ENCODE measurements at regions of chr5 and their contacts with region 1.

Region 1: DNA sequence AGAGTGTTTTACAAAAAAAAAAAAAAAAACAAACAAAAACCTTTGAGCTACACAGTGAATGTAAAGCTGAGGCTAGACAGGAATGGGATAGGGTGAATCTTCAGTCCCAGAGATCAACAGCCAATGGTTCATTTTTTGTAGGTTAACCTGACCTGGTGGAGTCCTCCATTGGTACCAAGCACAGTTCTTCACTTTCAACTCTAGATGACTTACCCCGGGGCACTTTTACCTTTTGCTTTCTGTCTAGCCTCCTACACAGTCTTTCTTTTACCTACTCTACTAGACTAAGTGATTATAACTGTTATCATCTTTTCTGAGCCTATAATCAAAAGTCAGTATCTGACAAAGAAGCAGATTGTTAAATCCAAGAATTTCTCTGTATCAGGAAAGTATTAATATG is 50.9 kb downstream of the ANXA2R start:
- DNase-seq: peak in 1 of 35 experiments; percentile 46
- ATAC-seq: no peak
- H3K4me3 ChIP-seq: peak overlapping the region in 1 of 2 donors; percentile 83
- H3K4me3 Mint-ChIP-seq: peak overlapping the region; percentile 83 to 100 (median 100)
- H3K27ac ChIP-seq: peak overlapping the region; percentile 89
- H3K27ac Mint-ChIP-seq: peak overlapping the region; percentile 90 to 100
- H3K4me1 ChIP-seq: peaks cover 25 to 39% of the 10 kb centered on the region in 2 experiments
- H3K4me1 Mint-ChIP-seq: peaks cover 59 to 76% (median 65%) of the 10 kb centered on the region in 3 donors
- H3K27me3 ChIP-seq: no peaks in the 10 kb centered on the region
- H3K27me3 Mint-ChIP-seq: no peaks in the 10 kb centered on the region

Region 2: GRCh38 chr5:43008369-43009153 is 19.4 kb after region 1 on chr5:
- CTCF ChIA-PET with region 1: interaction called, 8 to 84 read pairs
- POLR2A ChIA-PET with region 1: interaction called, 16 to 48 read pairs
- DNase-seq: peak; percentile 83 to 97 (median 90)
- ATAC-seq: peak; percentile 65 to 72 (median 71)
- H3K4me3 ChIP-seq: peak overlapping the region; percentile 54 to 97
- H3K4me3 Mint-ChIP-seq: peak overlapping the region; percentile 85 to 87 (median 85)
- H3K27ac ChIP-seq: peak overlapping the region; percentile 87
- H3K27ac Mint-ChIP-seq: peak overlapping the region; percentile 96 to 99
- H3K4me1 ChIP-seq: peaks cover 22 to 34% of the 10 kb centered on the region in 2 experiments
- H3K4me1 Mint-ChIP-seq: peaks cover 40 to 51% (median 42%) of the 10 kb centered on the region in 3 donors
- H3K27me3 ChIP-seq: no peaks in the 10 kb centered on the region
- H3K27me3 Mint-ChIP-seq: no peaks in the 10 kb centered on the region